ENCODE measurements at regions of chr11 and their contacts with region 1.

Region 1: DNA sequence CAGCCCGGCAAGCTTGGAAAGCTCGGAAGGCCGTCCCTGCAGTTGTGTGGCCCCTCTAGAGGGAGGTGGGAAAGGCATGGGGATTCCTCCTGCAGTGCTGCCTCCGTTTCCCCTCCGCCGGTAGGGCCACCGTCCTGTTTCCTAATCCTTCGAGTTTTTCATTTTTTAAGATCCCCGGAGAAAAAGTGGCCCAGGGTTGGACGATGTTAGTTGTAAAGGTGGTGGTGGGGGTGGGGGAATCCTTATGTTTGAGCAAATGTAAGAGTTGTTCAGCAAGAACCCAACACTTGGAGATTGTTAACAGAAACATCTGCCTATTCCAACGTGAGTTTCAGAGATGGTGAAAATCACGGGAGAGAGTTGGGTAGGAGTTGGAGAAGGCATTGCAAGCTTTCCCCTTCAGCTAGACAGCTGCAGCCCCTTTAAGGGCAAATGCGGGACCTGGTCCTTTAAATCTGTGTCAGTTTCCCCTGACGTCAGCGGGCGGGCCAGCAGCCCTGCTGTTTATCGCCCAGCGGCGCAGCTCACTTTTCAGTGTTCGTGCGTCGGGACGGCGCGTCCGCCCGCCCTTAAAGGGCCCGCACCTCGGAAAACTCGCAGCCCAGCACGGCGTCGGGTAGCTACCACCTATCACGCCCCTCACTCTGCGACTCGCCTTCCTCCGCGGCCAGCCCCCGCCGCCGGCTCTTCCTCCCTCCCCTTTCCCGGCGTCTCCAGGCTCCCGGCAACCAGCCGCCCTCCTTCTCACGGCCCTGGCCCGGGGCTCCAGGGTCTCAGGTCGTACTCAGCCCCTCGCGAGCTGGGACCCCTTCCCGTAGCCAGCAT is at the start of gene SIDT2:
- DNase-seq: peak; percentile 97
- H3K4me3 Mint-ChIP-seq: peak within 1 kb of the TSS; percentile 88
- H3K27ac Mint-ChIP-seq: peak within 1 kb of the TSS; percentile 86
- H3K4me1 Mint-ChIP-seq: peaks cover 26% of the 10 kb centered on the region
- H3K27me3 Mint-ChIP-seq: no peaks in the 10 kb centered on the region
- total RNA-seq, gene SIDT2: 23.9 and 29.1 TPM in 2 replicates

Region 2: DNA sequence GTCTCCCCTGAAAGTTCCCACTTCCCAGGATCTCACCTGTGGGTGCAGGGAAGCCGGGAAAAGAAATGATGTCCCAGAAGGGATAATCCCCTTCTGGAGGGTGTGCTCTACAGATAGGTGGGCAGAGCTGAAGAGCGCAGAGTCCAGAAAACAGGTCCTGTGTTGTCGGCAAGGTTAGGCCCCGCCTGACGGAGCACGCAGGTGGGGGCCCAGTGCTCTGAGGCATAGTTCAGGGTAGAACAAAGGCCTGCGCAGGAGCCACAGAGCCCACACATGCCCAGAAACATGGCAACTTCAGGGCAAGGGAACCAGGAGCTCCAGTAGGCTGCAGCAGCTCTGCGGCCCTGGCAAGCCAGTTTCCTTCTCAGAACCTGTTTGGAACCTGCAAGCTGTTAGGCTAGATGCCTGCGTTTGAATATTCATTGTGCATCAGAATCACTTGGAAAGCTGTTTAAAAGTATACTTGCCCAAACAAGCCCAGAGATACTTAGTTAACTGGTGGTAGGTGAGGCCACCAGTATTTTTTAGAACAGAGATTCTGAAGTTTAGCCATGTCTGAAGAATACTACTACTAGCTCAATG is 792.2 kb before region 1 on chr11:
- intact Hi-C with region 1: no loop called
- DNase-seq: no peak
- H3K4me3 Mint-ChIP-seq: no peak overlapping the region
- H3K27ac Mint-ChIP-seq: no peak overlapping the region
- H3K4me1 Mint-ChIP-seq: no peaks in the 10 kb centered on the region
- H3K27me3 Mint-ChIP-seq: no peaks in the 10 kb centered on the region

Region 3: DNA sequence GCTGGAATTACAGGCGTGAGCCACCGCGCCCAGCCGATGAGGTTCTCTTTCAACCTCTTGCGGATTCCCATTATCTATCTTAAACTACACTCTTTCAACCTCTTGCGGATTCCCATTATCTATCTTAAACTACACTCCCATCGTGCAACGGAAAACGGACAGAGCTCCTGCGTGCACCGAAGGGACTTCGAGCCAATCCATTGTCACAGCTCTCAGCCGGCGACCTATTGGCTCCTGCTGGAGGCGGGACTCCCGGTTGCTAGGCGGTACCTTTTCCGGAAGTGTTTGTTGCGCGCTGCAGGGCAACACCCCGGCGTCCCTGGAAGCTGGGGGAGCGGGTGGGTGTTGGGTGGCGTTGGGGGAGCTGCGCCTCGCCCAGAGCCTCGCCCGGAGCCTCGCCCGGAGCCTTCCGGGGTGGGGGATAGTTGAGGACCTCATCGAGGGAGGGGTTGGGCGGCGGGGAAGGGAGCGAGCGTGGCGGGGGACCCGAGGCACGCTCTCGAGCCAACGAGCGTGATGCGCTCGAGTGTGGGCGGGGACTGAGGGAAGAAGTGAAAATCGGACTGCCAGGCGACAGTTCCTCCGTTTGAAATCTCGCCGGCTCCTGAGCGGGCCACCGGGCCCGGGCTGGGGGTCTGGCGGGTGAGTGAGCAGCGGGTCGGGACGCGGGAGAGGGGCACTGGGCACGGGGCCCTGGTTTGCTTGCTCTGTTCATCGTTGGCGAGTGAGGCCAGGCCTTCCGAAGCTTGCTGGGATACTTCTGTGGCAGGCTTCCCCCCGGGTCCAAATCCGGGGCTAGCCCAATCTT is 149.3 kb after region 1 on chr11 and contains the start of gene CEP164:
- intact Hi-C with region 1: loop called (anchors 2 kb)
- DNase-seq: peak; percentile 98
- H3K4me3 Mint-ChIP-seq: peak within 1 kb of the TSS; percentile 62
- H3K27ac Mint-ChIP-seq: peak within 1 kb of the TSS; percentile 68
- H3K4me1 Mint-ChIP-seq: peaks cover 15% of the 10 kb centered on the region
- H3K27me3 Mint-ChIP-seq: peaks cover 9% of the 10 kb centered on the region
- total RNA-seq, gene CEP164: 39.0 and 40.1 TPM in 2 replicates

Measured in activated CD4-positive, alpha-beta T cell treated with anti-CD3 and anti-CD28 coated beads, Interleukin-2, amount 10 ng/mL, durations not matched to agents 24 days and 14 days (primary cell).